Esophagus muscularis mucosa (tissue), 4 donors: ENCODE measurements at regions of chr16 and their contacts with region 1.

Region 1: DNA sequence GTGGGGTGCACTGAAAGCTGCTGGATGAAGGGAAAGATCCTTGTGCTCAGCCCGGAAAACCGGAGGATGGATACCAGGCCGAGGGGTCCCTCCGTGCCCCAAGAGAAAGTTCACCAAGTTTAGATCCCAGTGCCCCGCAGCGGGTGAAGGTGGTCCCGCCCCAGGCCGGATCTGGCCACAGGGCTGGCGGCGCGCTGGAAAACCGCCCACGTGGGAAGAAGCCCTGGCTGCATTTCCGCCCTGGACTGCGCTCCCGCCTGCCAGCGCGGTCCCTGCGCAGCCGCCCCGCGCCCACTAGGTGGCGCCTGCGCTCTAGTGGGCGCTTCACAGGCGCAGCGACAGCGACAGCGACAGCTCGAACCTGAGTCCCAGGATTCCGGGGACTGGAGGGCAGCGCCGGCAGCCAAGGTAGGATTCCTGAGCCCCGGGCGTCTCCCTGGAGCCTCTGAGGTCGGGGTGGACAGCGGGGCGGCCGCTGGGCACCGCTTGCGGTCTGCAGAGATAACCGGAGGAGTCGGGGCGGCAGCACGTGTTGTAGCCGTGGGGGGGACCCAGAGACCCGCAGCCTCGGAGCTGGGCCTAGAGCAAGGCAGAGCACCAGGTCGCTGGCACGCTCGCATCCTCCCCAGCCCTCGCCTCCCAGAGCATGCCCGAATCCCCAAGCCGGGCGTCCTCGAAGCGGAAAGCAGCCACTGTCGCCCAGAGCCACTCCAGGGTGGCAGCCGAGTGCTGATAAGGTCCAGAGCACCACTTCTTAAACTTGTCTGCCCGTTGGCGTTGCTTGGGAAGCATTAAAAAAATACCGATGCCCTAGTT is at the start of gene CHD9:
- DNase-seq: peak; percentile 96
- H3K4me3 ChIP-seq: peak within 1 kb of the TSS; percentile 63 to 92 (median 68)
- H3K27ac ChIP-seq: peak within 1 kb of the TSS; percentile 72 to 89 (median 78)
- H3K4me1 ChIP-seq: peaks cover 27 to 50% (median 35%) of the 10 kb centered on the region in 4 donors
- H3K27me3 ChIP-seq: no peaks in the 10 kb centered on the region
- CTCF ChIP-seq: peak in 2 of 3 experiments; percentile 96 to 99
- EP300 ChIP-seq: no peak
- POLR2A ChIP-seq: no peak
- total RNA-seq, gene CHD9: 45.2 to 64.0 (median 49.5) TPM

Region 2: GRCh38 chr16:53091466-53092211 is 36.8 kb after region 1 on chr16:
- intact Hi-C with region 1: loop called (anchors 5 kb)
- DNase-seq: no peak
- H3K4me3 ChIP-seq: peak overlapping the region in 2 of 4 donors; percentile 29 to 40
- H3K27ac ChIP-seq: peak overlapping the region; percentile 81 to 90 (median 86)
- H3K4me1 ChIP-seq: peaks cover 61 to 75% (median 71%) of the 10 kb centered on the region in 4 donors
- H3K27me3 ChIP-seq: no peaks in the 10 kb centered on the region
- CTCF ChIP-seq: no peak
- EP300 ChIP-seq: no peak
- POLR2A ChIP-seq: no peak

Region 3: GRCh38 chr16:53130159-53131049 is 75.5 kb after region 1 on chr16:
- intact Hi-C with region 1: loop called (anchors 2 kb)
- DNase-seq: peak; percentile 99
- H3K4me3 ChIP-seq: peak overlapping the region; percentile 83 to 91 (median 90)
- H3K27ac ChIP-seq: peak overlapping the region; percentile 93 to 97 (median 96)
- H3K4me1 ChIP-seq: peaks cover 22 to 49% (median 43%) of the 10 kb centered on the region in 4 donors
- H3K27me3 ChIP-seq: no peaks in the 10 kb centered on the region
- CTCF ChIP-seq: peak; percentile 70 to 88 (median 80)
- EP300 ChIP-seq: no peak
- POLR2A ChIP-seq: peak; percentile 28

Region 4: DNA sequence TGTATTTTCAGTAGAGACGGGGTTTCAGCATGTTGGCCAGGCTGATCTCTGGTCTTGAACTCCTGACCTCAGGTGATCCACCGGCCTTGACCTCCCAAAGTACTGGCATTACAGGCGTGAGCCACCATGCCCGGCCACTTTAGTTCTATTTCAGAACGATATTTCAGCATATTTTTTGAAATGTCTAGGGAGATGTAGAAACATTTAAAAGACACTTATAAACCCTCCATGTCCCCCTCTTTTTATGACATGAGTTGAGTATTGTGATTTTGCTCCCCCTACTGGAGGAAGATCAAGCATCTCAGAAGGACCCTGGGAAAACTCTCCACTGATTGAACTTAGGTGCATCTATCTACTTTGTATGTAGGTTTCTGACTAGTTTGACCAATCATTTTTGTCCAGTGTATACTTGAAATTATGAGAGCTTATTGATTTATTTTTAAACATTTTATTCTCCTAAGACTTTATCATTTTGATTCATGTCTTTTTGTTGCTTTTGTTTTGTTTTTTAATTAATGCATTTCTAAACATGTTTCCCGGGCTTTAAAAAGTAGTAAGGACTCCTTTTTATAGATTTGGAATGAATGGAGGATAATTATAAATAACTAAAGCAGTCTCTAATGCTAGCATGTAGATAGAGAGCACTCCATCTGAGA is 105.0 kb after region 1 on chr16:
- intact Hi-C with region 1: loop called (anchors 2 kb)
- DNase-seq: no peak
- H3K4me3 ChIP-seq: no peak overlapping the region
- H3K27ac ChIP-seq: no peak overlapping the region
- H3K4me1 ChIP-seq: peaks cover 0 to 8% (median 4%) of the 10 kb centered on the region in 4 donors
- H3K27me3 ChIP-seq: no peaks in the 10 kb centered on the region
- CTCF ChIP-seq: peak; percentile 59 to 72 (median 71)
- EP300 ChIP-seq: no peak
- POLR2A ChIP-seq: no peak

Region 5: GRCh38 chr16:53207810-53208752 is 153.2 kb after region 1 on chr16:
- intact Hi-C with region 1: loop called (anchors 5 kb)
- DNase-seq: no peak
- H3K4me3 ChIP-seq: peak overlapping the region; percentile 42 to 57 (median 44)
- H3K27ac ChIP-seq: peak overlapping the region; percentile 71 to 84 (median 78)
- H3K4me1 ChIP-seq: peaks cover 45 to 60% (median 56%) of the 10 kb centered on the region in 4 donors
- H3K27me3 ChIP-seq: no peaks in the 10 kb centered on the region
- CTCF ChIP-seq: peak; percentile 49 to 58 (median 53)
- EP300 ChIP-seq: no peak
- POLR2A ChIP-seq: no peak

Region 6: GRCh38 chr16:53282975-53283946 is 228.4 kb after region 1 on chr16:
- intact Hi-C with region 1: loop called (anchors 10 kb)
- DNase-seq: no peak
- H3K4me3 ChIP-seq: no peak overlapping the region
- H3K27ac ChIP-seq: no peak overlapping the region
- H3K4me1 ChIP-seq: peaks cover 0 to 21% (median 8%) of the 10 kb centered on the region in 4 donors
- H3K27me3 ChIP-seq: no peaks in the 10 kb centered on the region
- CTCF ChIP-seq: peak; percentile 22 to 50 (median 30)
- EP300 ChIP-seq: no peak
- POLR2A ChIP-seq: no peak